Activated CD4-positive, alpha-beta T cell treated with anti-CD3 and anti-CD28 coated beads for 36 hours (primary cell): ENCODE measurements at regions of chr3 and their contacts with region 1.

Region 1: DNA sequence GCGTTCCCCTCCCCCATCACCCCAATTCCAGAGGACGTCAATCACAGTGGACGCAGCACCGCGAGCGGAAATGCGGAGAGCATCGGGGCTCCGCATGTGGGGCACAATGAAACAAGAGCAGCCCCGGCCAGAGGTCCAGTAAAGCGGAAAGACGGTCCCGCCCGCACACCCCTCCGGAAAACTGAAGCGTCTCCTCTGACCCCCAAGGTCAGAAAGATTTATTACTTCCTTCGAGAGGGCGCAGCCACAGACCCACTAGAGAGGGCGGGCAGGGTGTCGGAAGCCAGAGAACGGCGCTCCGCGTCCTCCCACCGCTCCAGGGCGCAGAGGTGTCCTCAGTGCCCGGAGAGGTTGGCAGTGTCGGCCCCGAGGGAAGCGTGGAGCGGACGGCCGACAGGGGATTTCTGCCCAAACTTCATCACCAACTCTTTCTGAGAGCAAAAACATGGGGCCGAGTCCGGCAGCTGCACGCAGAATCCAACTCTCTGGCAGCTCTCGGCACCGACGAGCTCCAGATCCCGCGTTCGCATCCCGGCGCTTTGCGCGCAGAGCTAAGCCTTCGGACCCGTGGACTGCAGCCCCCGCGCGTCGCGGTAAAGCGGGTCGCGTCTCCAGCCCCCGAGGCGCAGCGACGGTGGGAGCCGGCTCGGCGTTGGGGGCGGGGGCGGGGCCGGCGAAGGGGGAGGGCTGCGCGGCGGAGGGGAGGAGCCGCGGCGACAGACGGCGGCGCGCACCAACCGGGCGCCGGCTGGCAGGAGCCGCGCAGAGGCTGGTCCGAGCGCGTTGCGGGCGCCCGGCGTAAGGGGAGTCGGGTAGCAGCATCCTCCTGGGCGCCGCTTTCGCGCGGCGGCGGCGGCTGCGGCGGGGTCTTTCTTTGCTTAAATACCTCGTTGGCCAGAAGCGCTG is at the start of gene CHST2:
- DNase-seq: peak; percentile 86
- ATAC-seq: peak; percentile 88
- H3K4me3 Mint-ChIP-seq: peak within 1 kb of the TSS; percentile 80
- H3K27ac Mint-ChIP-seq: peak within 1 kb of the TSS; percentile 67
- H3K4me1 Mint-ChIP-seq: peaks cover 27% of the 10 kb centered on the region
- H3K27me3 Mint-ChIP-seq: peaks cover 2% of the 10 kb centered on the region
- total RNA-seq, gene CHST2: 5.1 to 6.8 TPM

Region 2: GRCh38 chr3:143060906-143061305 is 58.4 kb before region 1 on chr3:
- CTCF ChIA-PET with region 1: no interaction called
- POLR2A ChIA-PET with region 1: no interaction called
- intact Hi-C with region 1: loop called in 1 of 2 experiments (anchors 1 kb)
- DNase-seq: no peak
- ATAC-seq: peak; percentile 95
- H3K4me3 Mint-ChIP-seq: no peak overlapping the region
- H3K27ac Mint-ChIP-seq: peak overlapping the region; percentile 70
- H3K4me1 Mint-ChIP-seq: peaks cover 26% of the 10 kb centered on the region
- H3K27me3 Mint-ChIP-seq: no peaks in the 10 kb centered on the region

Region 3: DNA sequence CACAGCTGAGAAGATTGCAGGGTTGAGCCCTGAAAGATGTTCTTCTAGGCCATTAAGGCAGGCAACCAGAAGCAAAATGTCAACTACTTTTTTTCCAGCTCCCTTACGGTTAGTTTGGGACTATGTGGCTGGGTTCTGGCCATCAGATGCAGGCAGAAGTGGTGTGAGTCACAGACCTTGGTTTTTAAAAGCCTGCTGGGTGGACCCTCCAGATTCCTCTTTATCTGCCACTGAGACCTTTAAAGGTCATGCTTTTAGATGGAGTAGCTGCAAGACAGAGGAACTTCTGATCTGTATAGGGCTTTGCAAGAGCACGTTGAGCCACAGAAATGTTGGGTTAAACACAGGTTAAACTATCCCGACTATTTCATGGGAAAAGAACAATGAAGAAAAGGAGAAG is 103.2 kb after region 1 on chr3:
- CTCF ChIA-PET with region 1: interaction called, 3 read pairs
- POLR2A ChIA-PET with region 1: no interaction called
- intact Hi-C with region 1: loop called in 1 of 2 experiments (anchors 5 kb)
- DNase-seq: no peak
- ATAC-seq: no peak
- H3K4me3 Mint-ChIP-seq: no peak overlapping the region
- H3K27ac Mint-ChIP-seq: no peak overlapping the region
- H3K4me1 Mint-ChIP-seq: peaks cover 7% of the 10 kb centered on the region
- H3K27me3 Mint-ChIP-seq: no peaks in the 10 kb centered on the region

Region 4: GRCh38 chr3:143247073-143247472 is 127.8 kb after region 1 on chr3:
- CTCF ChIA-PET with region 1: no interaction called
- POLR2A ChIA-PET with region 1: no interaction called
- intact Hi-C with region 1: no loop called
- DNase-seq: no peak
- ATAC-seq: no peak
- H3K4me3 Mint-ChIP-seq: no peak overlapping the region
- H3K27ac Mint-ChIP-seq: no peak overlapping the region
- H3K4me1 Mint-ChIP-seq: no peaks in the 10 kb centered on the region
- H3K27me3 Mint-ChIP-seq: no peaks in the 10 kb centered on the region

Region 5: DNA sequence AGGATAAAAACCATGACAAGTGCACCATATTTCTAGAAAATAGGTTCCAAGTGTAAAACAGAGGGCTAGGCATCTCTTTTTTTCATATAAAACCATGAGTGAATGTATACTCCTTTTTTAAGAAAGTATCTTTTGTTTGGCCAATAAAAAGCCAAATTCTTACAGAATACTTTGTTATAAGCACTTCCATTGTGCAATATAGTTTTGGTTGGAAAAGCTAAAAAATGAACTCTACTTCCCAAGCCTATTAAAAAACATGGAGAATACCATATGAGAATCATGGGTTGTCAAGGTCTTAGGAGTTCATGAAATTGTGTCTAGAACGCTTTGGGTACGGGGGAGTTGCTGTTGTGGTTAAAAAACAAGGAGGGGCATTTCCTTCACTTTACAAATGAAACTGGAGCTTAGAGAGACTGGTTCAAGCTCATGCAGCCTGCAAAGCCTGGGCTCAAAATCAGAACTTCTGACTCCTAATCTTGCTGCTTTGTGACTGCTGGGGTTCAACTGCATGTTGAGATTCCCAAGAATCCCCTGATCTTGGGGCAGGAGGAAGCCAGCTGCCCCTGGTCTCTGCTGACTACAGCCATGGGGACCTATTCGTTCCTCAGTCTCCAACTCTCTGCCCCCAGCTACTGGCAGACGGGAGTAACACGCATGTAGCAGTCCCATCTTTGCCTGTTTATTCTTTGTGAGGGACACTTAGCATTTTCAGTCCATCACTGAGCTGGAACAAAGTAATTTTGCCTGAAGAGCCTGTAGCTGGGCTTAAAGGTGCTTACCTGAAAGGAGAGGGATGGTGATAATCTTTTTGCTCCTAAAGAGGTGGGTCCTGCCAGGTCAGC is 229.4 kb after region 1 on chr3:
- CTCF ChIA-PET with region 1: no interaction called
- POLR2A ChIA-PET with region 1: no interaction called
- intact Hi-C with region 1: loop called in 1 of 2 experiments (anchors 10 kb)
- DNase-seq: peak; percentile 12
- ATAC-seq: no peak
- H3K4me3 Mint-ChIP-seq: no peak overlapping the region
- H3K27ac Mint-ChIP-seq: no peak overlapping the region
- H3K4me1 Mint-ChIP-seq: peaks cover 33% of the 10 kb centered on the region
- H3K27me3 Mint-ChIP-seq: no peaks in the 10 kb centered on the region

Region 6: GRCh38 chr3:143443851-143444331 is 324.6 kb after region 1 on chr3:
- CTCF ChIA-PET with region 1: interaction called, 3 read pairs
- POLR2A ChIA-PET with region 1: no interaction called
- intact Hi-C with region 1: loop called in 1 of 2 experiments (anchors 10 kb)
- DNase-seq: peak; percentile 42
- ATAC-seq: peak; percentile 71
- H3K4me3 Mint-ChIP-seq: no peak overlapping the region
- H3K27ac Mint-ChIP-seq: peak overlapping the region; percentile 38
- H3K4me1 Mint-ChIP-seq: peaks cover 32% of the 10 kb centered on the region
- H3K27me3 Mint-ChIP-seq: no peaks in the 10 kb centered on the region

Region 7: DNA sequence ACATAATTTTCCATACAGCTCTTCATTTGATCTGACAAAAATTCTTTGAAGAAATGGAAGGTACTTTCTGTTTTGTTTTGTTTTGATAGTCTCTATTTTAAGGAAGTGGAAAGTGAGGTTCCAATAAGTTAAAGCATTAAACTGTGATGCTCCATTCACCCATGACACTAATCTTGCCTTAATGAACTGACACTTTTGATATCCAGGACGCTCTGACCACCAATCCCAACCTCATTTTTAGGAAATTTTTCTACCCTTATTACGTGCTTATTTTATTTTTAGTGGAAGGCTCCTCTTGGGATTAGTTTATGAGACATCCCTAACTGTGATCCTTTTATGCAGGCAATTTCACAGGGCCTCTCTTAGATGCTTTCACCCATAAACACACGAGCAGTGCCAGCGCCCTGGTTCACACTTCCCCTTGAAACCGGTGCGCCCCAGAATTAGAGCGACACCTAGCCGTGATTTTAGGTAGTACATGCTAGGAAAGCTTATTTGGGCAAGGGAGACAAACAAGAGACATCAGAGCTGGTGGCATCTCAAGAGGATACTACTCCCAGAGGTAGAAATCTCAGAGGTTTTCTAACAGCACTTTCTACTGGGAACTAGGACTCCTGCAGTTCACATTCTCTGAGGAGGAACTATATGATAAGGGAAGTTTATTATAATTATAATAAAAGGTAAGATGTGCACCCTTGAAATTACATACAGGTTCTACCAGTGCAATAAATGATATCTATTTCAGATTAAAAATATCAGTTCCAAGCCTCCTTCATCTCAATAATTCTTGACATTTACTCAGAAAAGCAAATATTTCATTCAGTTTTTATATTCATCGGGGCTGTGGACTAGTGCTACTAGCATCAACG is 555.1 kb after region 1 on chr3:
- CTCF ChIA-PET with region 1: interaction called, 11 read pairs
- POLR2A ChIA-PET with region 1: no interaction called
- intact Hi-C with region 1: loop called (anchors 1 to 2 kb)
- DNase-seq: peak; percentile 85
- ATAC-seq: peak; percentile 96
- H3K4me3 Mint-ChIP-seq: no peak overlapping the region
- H3K27ac Mint-ChIP-seq: peak overlapping the region; percentile 52
- H3K4me1 Mint-ChIP-seq: peaks cover 8% of the 10 kb centered on the region
- H3K27me3 Mint-ChIP-seq: no peaks in the 10 kb centered on the region

Region 8: GRCh38 chr3:143972505-143973255 is 853.4 kb after region 1 on chr3:
- CTCF ChIA-PET with region 1: no interaction called
- POLR2A ChIA-PET with region 1: no interaction called
- intact Hi-C with region 1: loop called in 1 of 2 experiments (anchors 2 kb)
- DNase-seq: peak; percentile 78
- ATAC-seq: peak; percentile 11
- H3K4me3 Mint-ChIP-seq: peak overlapping the region; percentile 96
- H3K27ac Mint-ChIP-seq: peak overlapping the region; percentile 87
- H3K4me1 Mint-ChIP-seq: peaks cover 29% of the 10 kb centered on the region
- H3K27me3 Mint-ChIP-seq: peaks cover 4% of the 10 kb centered on the region